Natural killer cell (primary cell): ENCODE measurements at regions of chr11 and their contacts with region 1.

Region 1: GRCh38 chr11:120807421-120808150 is 216.3 kb upstream of the TBCEL start:
- DNase-seq: no peak
- ATAC-seq: no peak
- H3K4me3 ChIP-seq: no peak overlapping the region
- H3K4me3 Mint-ChIP-seq: peak overlapping the region; percentile 60
- H3K27ac ChIP-seq: peak overlapping the region; percentile 11
- H3K27ac Mint-ChIP-seq: peak overlapping the region in 1 of 2 donors; percentile 66
- H3K4me1 ChIP-seq: peaks cover 46% of the 10 kb centered on the region
- H3K4me1 Mint-ChIP-seq: peaks cover 71 to 84% of the 10 kb centered on the region in 2 donors
- H3K27me3 ChIP-seq: peaks cover 3% of the 10 kb centered on the region
- H3K27me3 Mint-ChIP-seq: peaks cover 0 to under 1% of the 10 kb centered on the region in 2 donors
- CTCF ChIP-seq: no peak

Region 2: GRCh38 chr11:120182790-120183491 is 624.6 kb before region 1 on chr11:
- intact Hi-C with region 1: no loop called
- DNase-seq: peak in 1 of 2 donors; percentile 6
- ATAC-seq: no peak
- H3K4me3 ChIP-seq: no peak overlapping the region
- H3K4me3 Mint-ChIP-seq: no peak overlapping the region
- H3K27ac ChIP-seq: no peak overlapping the region
- H3K27ac Mint-ChIP-seq: no peak overlapping the region
- H3K4me1 ChIP-seq: no peaks in the 10 kb centered on the region
- H3K4me1 Mint-ChIP-seq: peaks cover 0 to 6% of the 10 kb centered on the region in 2 donors
- H3K27me3 ChIP-seq: no peaks in the 10 kb centered on the region
- H3K27me3 Mint-ChIP-seq: peaks cover 14 to 19% of the 10 kb centered on the region in 2 donors
- CTCF ChIP-seq: no peak

Region 3: GRCh38 chr11:120773501-120774031 is 34.0 kb before region 1 on chr11:
- intact Hi-C with region 1: no loop called
- DNase-seq: no peak
- ATAC-seq: no peak
- H3K4me3 ChIP-seq: no peak overlapping the region
- H3K4me3 Mint-ChIP-seq: no peak overlapping the region
- H3K27ac ChIP-seq: no peak overlapping the region
- H3K27ac Mint-ChIP-seq: peak overlapping the region in 1 of 2 donors; percentile 87
- H3K4me1 ChIP-seq: no peaks in the 10 kb centered on the region
- H3K4me1 Mint-ChIP-seq: peaks cover 24 to 44% of the 10 kb centered on the region in 2 donors
- H3K27me3 ChIP-seq: no peaks in the 10 kb centered on the region
- H3K27me3 Mint-ChIP-seq: no peaks in the 10 kb centered on the region
- CTCF ChIP-seq: no peak

Region 4: DNA sequence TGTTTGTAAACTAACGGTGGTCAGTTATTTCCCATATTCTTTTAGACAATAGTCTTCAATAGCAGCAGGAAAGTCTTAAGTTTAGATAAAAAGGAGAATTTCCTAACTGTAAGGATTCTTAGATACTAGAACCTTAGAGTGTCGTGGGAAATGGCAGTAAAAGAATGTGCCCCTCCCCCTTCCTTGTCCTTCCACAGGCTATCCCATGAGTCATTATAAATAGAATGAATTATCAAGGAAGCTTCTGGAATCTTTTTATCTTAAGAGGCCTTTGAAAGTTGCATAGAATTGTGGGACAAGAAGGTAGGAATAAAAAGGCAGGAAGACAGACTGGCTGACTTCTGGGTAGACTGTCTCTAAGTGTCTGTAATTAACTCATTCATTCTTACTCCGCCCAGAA is 51.2 kb after region 1 on chr11:
- intact Hi-C with region 1: loop called (anchors 5 kb)
- DNase-seq: no peak
- ATAC-seq: no peak
- H3K4me3 ChIP-seq: no peak overlapping the region
- H3K4me3 Mint-ChIP-seq: no peak overlapping the region
- H3K27ac ChIP-seq: no peak overlapping the region
- H3K27ac Mint-ChIP-seq: peak overlapping the region in 1 of 2 donors; percentile 80
- H3K4me1 ChIP-seq: peaks cover 30% of the 10 kb centered on the region
- H3K4me1 Mint-ChIP-seq: peaks cover 26 to 58% of the 10 kb centered on the region in 2 donors
- H3K27me3 ChIP-seq: no peaks in the 10 kb centered on the region
- H3K27me3 Mint-ChIP-seq: no peaks in the 10 kb centered on the region
- CTCF ChIP-seq: no peak